ENCODE measurements at regions of chr20 and their contacts with region 1.

Region 1: DNA sequence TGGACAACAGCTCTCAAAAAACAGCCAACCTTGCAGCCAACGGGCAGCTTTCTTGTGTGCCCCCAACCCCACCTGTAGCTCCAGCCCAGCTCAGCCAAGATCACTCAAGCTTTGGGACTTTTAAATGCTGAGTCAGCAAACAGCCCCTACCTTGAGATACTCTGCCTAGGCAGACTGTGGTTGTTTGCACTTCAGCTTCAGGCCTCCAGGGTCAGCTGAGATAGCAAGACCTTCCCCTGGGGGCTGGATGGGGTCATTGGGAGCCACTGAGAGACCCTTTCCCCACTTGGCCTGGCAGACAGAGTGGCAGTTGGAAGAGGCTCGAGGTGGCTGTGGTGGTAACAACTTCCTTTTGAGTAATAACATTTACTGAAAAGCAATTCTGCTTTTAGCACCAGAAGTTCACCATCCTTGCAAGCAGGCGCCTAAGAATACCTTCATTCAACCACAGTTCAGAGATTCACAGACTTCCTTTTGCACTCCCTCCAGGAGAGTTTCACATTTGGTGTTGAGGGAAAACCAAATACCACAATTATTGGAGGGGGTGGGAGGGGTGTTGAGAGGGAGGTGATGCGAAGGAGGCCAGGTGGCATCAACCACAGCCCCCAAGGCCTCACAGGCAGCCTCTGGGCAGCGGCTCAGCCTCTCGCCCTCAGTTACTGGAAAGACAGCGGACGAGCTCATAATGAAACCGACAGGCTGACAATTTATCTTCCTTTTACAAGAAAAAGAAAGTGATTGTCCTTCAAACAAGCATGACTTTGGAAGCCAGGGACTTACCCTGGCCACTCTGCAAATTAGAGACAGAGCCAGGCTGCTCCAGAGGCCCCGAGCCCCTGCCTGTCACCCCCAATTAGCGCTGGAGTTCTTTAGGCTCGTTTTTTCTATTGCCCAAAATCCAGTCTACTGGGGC is 148.1 kb downstream of the CEBPB start:
- DNase-seq: peak; percentile 78
- H3K4me3 Mint-ChIP-seq: peak overlapping the region; percentile 58
- H3K27ac Mint-ChIP-seq: peak overlapping the region; percentile 87
- H3K4me1 Mint-ChIP-seq: peaks cover 69% of the 10 kb centered on the region
- H3K27me3 Mint-ChIP-seq: no peaks in the 10 kb centered on the region

Region 2: GRCh38 chr20:50198180-50198666 is 140.5 kb before region 1 on chr20:
- CTCF ChIA-PET with region 1: no interaction called
- POLR2A ChIA-PET with region 1: no interaction called
- DNase-seq: no peak
- H3K4me3 Mint-ChIP-seq: no peak overlapping the region
- H3K27ac Mint-ChIP-seq: no peak overlapping the region
- H3K4me1 Mint-ChIP-seq: peaks cover 25% of the 10 kb centered on the region
- H3K27me3 Mint-ChIP-seq: no peaks in the 10 kb centered on the region

Region 3: DNA sequence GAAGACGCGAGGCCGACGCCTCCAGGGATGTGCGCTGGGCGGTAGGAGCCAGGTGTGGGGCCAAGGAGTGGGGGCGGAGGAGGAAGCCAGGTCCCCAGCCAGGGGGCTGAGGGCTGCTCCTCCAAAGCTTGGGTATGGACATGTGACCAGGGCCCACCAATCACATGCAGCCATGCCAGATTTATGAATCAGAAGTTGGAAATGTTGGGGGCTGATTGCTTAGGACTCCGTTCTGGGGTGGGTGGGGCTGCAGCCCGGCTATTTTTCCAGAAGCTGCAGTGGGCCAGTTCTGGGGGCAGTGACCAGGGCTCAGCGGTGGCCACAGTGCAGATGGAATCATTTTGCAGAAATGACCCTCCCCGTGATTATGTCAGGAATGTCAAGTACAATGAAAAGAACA is 52.1 kb before region 1 on chr20:
- CTCF ChIA-PET with region 1: interaction called, 5 read pairs
- POLR2A ChIA-PET with region 1: interaction called, 21 read pairs
- DNase-seq: no peak
- H3K4me3 Mint-ChIP-seq: no peak overlapping the region
- H3K27ac Mint-ChIP-seq: no peak overlapping the region
- H3K4me1 Mint-ChIP-seq: peaks cover 44% of the 10 kb centered on the region
- H3K27me3 Mint-ChIP-seq: no peaks in the 10 kb centered on the region

Region 4: GRCh38 chr20:50491168-50491567 is 152.4 kb after region 1 on chr20:
- CTCF ChIA-PET with region 1: no interaction called
- POLR2A ChIA-PET with region 1: no interaction called
- DNase-seq: no peak
- H3K4me3 Mint-ChIP-seq: no peak overlapping the region
- H3K27ac Mint-ChIP-seq: no peak overlapping the region
- H3K4me1 Mint-ChIP-seq: peaks cover 27% of the 10 kb centered on the region
- H3K27me3 Mint-ChIP-seq: no peaks in the 10 kb centered on the region

Measured in activated CD4-positive, alpha-beta memory T cell treated with anti-CD3 and anti-CD28 coated beads, Interleukin-2, amount 10 ng/mL, durations not matched to agents 7 days and 5 days (primary cell).